ENCODE measurements at regions of chr2 and their contacts with region 1.

Region 1: DNA sequence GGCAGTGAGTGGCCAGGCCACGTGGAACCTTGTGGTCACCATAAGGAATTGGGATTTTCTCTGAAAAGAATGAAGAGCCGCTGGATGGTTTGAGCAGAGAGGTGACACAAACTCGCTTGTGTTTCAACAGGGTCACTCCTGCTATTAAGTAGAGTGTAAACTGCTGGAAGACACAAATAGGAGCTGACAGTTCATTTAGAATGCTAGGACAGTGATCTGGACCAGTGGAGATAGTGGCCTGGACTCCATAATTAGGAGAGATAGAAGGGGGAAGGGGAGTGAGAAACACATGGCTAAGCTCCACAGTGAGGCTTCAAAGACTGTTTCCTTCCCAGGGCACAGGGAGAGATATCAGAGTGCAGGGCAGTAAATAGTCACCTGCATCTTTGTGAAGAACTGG is 381.1 kb upstream of the ST6GAL2 start:
- DNase-seq: no peak
- ATAC-seq: no peak
- H3K4me3 ChIP-seq: no peak overlapping the region
- H3K27ac ChIP-seq: no peak overlapping the region
- H3K4me1 ChIP-seq: no peaks in the 10 kb centered on the region
- H3K27me3 ChIP-seq: peaks cover 94% of the 10 kb centered on the region
- CTCF ChIP-seq: no peak

Region 2: DNA sequence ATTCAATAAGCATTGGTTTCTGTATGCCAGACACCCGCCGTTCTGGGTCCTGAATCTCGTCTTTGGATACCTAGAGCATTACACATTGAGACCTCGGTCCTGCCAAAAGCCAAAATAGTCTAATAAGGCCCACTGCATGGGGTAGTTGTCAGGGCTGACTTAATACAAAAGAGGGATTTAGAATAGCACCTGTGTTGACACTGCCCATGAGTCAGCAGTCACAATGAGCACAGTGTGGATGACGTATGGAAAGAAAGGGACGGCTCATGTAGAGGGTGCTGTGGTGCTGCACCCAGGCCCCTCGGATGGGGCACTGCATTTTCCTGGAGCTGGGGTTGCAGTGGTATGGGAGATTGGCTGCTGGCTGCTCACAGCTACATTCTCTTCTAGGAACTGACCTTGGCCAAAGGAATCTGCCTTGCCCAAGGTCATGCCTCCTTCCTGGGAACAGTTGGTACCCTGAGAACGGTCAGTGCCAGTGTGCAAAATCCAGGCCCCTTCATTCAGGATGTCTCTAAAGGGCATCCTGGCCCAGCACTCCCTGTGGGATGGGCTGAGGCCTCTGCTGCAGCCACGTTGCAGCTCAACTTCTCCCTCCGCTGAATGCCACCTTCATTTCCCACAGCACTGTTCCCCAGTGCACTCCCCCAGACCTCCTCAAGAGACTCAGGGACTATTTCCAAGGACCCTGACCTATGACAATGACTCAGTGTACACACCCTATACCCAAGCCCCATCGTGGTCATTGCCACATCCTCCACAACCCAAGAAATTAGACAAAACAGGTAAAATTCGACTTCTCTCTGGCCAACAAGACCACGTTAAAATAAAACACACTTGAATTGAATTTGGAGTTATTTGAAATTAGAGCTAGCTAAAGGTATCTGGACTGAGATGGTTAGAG is 1649.1 kb before region 1 on chr2:
- CTCF ChIA-PET with region 1: no interaction called
- POLR2A ChIA-PET with region 1: interaction called, 10 read pairs
- intact Hi-C with region 1: no loop called
- DNase-seq: peak; percentile 90
- ATAC-seq: peak; percentile 100
- H3K4me3 ChIP-seq: no peak overlapping the region
- H3K27ac ChIP-seq: peak overlapping the region; percentile 30
- H3K4me1 ChIP-seq: peaks cover 14% of the 10 kb centered on the region
- H3K27me3 ChIP-seq: no peaks in the 10 kb centered on the region
- CTCF ChIP-seq: peak; percentile 40

Region 3: DNA sequence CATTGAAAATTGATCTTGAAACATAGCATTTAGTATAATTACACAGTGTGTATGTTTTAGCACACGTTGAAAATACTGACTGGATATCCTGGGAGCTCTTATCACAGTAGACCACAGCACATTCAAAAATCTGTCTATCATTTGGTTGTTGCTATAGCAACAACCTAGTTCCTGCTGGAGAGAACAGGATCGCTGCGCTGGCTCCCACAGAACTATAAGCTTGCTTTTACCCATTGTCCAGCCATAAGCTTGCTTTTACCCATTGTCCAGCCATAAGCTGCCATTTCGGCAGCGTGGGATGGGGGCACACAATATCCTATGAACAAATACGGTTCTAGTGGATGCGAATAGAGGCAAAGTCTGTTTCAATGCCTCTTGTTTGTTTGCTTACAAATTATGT is 310.7 kb before region 1 on chr2:
- CTCF ChIA-PET with region 1: no interaction called
- POLR2A ChIA-PET with region 1: no interaction called
- intact Hi-C with region 1: no loop called
- DNase-seq: no peak
- ATAC-seq: no peak
- H3K4me3 ChIP-seq: no peak overlapping the region
- H3K27ac ChIP-seq: no peak overlapping the region
- H3K4me1 ChIP-seq: no peaks in the 10 kb centered on the region
- H3K27me3 ChIP-seq: no peaks in the 10 kb centered on the region
- CTCF ChIP-seq: no peak

Region 4: GRCh38 chr2:107160640-107161239 is 106.3 kb before region 1 on chr2:
- CTCF ChIA-PET with region 1: no interaction called
- POLR2A ChIA-PET with region 1: no interaction called
- intact Hi-C with region 1: no loop called
- DNase-seq: no peak
- ATAC-seq: no peak
- H3K4me3 ChIP-seq: no peak overlapping the region
- H3K27ac ChIP-seq: no peak overlapping the region
- H3K4me1 ChIP-seq: no peaks in the 10 kb centered on the region
- H3K27me3 ChIP-seq: peaks cover 75% of the 10 kb centered on the region
- CTCF ChIP-seq: no peak

Region 5: DNA sequence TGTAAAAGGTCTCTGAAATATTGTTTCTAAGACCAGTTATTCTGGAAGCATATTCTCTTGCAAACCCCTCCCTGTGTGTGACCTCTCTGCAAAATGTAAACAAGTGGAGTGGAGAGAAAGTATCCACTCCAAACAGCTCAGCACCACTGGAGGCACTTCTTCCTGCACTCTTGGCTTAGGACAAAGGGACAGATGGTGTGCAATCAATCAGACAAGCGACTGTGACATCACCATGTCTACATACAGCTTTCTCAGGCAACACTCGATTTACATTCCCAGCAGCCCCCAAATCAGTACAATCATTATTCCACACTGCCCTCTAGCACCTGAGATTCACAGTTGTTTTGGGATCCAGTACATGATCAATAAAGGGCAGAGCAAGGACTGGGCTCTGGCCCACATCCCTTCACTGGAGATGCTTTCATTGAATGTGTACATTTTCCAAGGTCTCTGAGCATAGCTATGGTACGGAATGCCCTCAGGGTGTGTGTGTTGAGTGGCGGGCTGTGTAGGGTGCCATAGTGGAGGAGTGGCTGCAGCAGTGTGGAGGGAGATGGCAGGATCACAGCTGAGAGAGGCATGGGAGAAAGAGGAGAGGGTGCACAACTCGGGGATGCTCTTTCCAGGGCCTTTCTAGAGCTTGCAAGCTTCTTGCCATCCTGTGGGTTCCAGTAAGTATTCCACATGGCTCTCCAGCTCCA is 69.3 kb before region 1 on chr2:
- CTCF ChIA-PET with region 1: no interaction called
- POLR2A ChIA-PET with region 1: no interaction called
- intact Hi-C with region 1: no loop called
- DNase-seq: no peak
- ATAC-seq: no peak
- H3K4me3 ChIP-seq: no peak overlapping the region
- H3K27ac ChIP-seq: no peak overlapping the region
- H3K4me1 ChIP-seq: no peaks in the 10 kb centered on the region
- H3K27me3 ChIP-seq: peaks cover 83% of the 10 kb centered on the region
- CTCF ChIP-seq: 0 out of 2 replicates have a peak, but pooled peaks have one; percentile 11